A549 (cell line): ENCODE measurements at regions of chrX and their contacts with region 1.

Region 1: GRCh38 chrX:37905436-37906147 is 58.2 kb upstream of the DYNLT3 start:
- DNase-seq: peak; percentile 10 to 45
- ATAC-seq: peak; percentile 93 to 96
- H3K4me3 ChIP-seq: peak overlapping the region; percentile 36
- H3K27ac ChIP-seq: peak overlapping the region; percentile 54 to 87
- H3K4me1 ChIP-seq: peaks cover 23% of the 10 kb centered on the region
- CTCF ChIP-seq: peak; percentile 45
- EP300 ChIP-seq: no peak
- POLR2A ChIP-seq: no peak
- RAD21 ChIP-seq: peak; percentile 30 to 69; a peak in 4 of 5 replicates

Region 2: GRCh38 chrX:37825209-37825842 is 80.3 kb before region 1 on chrX:
- CTCF ChIA-PET with region 1: interaction called, 13 read pairs
- POLR2A ChIA-PET with region 1: no interaction called
- DNase-seq: peak; percentile 10 to 38
- ATAC-seq: peak; percentile 56 to 81; a peak in 4 of 6 replicates
- H3K4me3 ChIP-seq: no peak overlapping the region
- H3K27ac ChIP-seq: no peak overlapping the region
- H3K4me1 ChIP-seq: peaks cover 6% of the 10 kb centered on the region; the same call in 2 of the 3 replicates
- CTCF ChIP-seq: peak; percentile 61
- EP300 ChIP-seq: no peak
- POLR2A ChIP-seq: no peak
- RAD21 ChIP-seq: peak; percentile 71 to 77

Region 3: GRCh38 chrX:37879692-37880091 is 25.9 kb before region 1 on chrX:
- CTCF ChIA-PET with region 1: no interaction called
- POLR2A ChIA-PET with region 1: no interaction called
- DNase-seq: no peak
- ATAC-seq: no peak
- H3K4me3 ChIP-seq: no peak overlapping the region
- H3K27ac ChIP-seq: no peak overlapping the region
- H3K4me1 ChIP-seq: peaks cover 13% of the 10 kb centered on the region; the same call in 2 of the 3 replicates
- CTCF ChIP-seq: no peak
- EP300 ChIP-seq: no peak
- POLR2A ChIP-seq: no peak
- RAD21 ChIP-seq: no peak

Region 4: DNA sequence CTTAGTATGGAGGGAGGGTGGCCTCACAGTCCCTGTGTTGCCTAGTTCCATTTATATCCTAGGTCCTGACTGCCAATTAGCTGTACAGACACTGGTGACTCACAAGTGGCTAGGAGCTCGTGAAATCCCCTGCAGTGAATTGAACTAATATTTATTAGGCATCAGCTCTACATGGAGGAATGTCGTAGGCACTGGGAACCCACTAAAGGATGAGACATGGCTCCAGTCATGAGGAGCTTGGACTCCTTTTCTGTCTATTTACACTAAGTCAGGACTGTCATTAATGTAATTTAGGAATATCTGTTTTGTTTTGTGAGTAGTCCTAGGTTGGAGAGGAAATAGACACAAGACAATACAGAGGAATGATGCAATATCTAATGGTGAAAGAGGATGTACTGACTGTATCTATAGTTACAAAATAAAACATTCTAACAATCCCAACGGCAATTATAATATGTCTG is 963.4 kb after region 1 on chrX:
- CTCF ChIA-PET with region 1: no interaction called
- POLR2A ChIA-PET with region 1: no interaction called
- DNase-seq: no peak
- ATAC-seq: no peak; a peak in 1 of 6 replicates
- H3K4me3 ChIP-seq: no peak overlapping the region
- H3K27ac ChIP-seq: no peak overlapping the region
- H3K4me1 ChIP-seq: no peaks in the 10 kb centered on the region
- CTCF ChIP-seq: no peak
- EP300 ChIP-seq: no peak
- POLR2A ChIP-seq: no peak
- RAD21 ChIP-seq: no peak